Dorsolateral prefrontal cortex (tissue), 120 donors: ENCODE measurements at regions of chr14 and their contacts with region 1.

Region 1: DNA sequence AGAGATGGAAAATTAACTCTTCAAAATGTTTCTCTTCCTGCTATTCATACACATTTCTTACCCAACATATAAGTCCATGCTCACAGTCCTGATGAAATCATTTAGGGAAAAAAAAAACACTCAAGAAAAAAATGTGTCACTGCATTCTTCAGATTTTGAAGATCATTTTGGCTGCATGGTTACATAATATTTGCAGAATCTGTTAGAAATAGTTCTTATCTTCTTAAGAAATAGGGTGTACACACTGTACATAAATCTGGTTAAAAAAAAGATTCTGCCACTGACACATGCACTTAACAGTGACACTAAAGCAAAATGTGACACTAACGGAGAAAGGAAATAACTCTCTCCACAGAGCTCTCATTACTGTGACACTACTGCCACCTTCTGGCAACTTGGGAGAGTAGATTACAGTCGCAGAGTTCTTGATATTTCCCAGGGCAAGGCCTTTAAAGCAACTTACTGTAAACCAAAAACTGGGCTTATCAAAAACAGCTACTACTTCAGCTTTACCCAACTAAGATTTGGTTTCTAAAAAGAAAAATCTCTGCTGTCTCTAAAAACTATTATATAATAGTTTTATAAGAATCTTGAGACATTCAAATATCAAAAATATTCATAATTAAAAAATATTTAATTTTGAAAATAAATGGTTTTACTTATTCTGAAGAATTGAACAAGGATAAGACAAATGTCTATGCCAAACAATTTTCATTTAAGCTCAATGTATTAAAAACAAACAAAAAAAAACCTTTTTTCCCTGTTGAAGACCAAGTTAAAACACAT is 65.0 kb downstream of the SETD3 start:
- DNase-seq: peak in 3 of 10 donors; percentile 48 to 71 (median 53)
- H3K4me3 ChIP-seq: no peak overlapping the region
- H3K27ac ChIP-seq: no peak overlapping the region
- H3K27me3 ChIP-seq: no peaks in the 10 kb centered on the region
- CTCF ChIP-seq: peak; percentile 62 to 96 (median 87)

Region 2: GRCh38 chr14:99320105-99320572 is 95.5 kb before region 1 on chr14:
- intact Hi-C with region 1: loop called in 1 of 2 experiments (anchors 2 kb)
- DNase-seq: no peak
- H3K4me3 ChIP-seq: no peak overlapping the region
- H3K27ac ChIP-seq: no peak overlapping the region
- H3K27me3 ChIP-seq: peaks cover 0 to 10% (median 0%) of the 10 kb centered on the region in 45 donors
- CTCF ChIP-seq: peak; percentile 31 to 79 (median 68)

Region 3: DNA sequence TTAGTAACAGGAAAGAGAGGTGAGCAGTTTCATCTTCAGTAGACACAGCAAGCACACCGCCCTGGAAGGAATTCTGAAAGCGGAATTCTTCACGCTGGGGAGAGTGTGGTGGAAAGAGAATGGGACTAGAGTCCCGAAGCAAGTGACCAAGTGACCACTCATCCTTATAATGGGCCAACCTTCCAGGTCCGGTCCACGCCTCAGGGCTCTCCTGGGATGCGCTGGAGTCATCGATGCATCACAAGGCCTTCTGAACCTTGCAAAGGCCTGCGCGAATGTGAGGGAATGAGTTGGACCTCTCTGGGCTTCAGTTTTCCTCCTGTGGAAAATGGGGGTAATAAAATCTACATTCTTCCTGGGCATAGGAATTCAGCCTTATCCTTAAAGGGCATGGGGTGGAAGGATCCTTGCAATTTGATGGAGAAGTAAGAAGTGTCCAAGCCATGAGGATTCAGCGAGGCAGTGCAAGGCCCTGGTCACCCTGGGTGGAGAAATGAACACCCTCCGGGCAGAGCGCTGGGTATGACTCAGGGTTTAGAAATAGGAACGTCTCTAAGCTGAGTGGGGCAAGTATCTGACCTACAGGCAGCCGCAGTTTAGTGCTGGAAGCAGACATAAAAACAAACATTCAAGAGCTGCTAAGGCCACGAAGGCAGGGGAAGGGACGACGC is 32.8 kb before region 1 on chr14:
- intact Hi-C with region 1: no loop called
- DNase-seq: no peak
- H3K4me3 ChIP-seq: no peak overlapping the region
- H3K27ac ChIP-seq: no peak overlapping the region
- H3K27me3 ChIP-seq: peaks cover 0 to 9% (median 0%) of the 10 kb centered on the region in 45 donors
- CTCF ChIP-seq: no peak